PC-9 (cell line): ENCODE measurements at regions of chr6 and their contacts with region 1.

Region 1: DNA sequence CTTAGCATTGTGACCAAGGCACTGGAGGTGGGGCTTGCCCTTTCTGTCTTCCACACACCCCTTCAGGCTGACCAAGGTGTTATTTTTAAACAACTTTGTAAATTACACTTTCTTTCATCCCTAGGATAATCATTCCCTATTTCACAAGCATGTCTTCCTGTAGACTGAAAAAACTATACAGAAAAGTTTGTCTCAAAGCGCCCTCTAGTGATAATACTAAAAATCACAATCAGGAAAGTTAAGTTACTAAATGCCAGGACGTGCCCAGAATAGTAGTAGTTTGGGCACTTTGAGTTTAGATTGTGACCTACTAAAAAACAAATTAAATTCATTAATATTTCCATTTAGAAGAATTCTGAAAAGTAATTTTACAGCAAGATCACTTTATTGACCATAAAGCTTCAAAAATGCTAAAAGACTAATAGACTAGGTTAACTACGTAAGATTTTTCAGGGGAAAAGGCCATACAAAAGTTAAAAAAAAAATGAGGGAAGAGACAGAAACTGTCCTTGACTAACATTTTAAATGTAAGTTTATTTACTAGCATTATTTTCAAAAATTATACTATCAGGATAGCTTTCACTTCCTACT is 123.3 kb upstream of the DUSP22 start:
- DNase-seq: no peak
- H3K4me3 ChIP-seq: no peak overlapping the region
- H3K27ac ChIP-seq: no peak overlapping the region
- H3K4me1 ChIP-seq: no peaks in the 10 kb centered on the region
- H3K27me3 ChIP-seq: 0 out of 2 replicates have a peak, but pooled peaks cover 5% of the 10 kb centered on the region
- CTCF ChIP-seq: peak; percentile 75

Region 2: GRCh38 chr6:188821-189655 is 20.1 kb after region 1 on chr6:
- CTCF ChIA-PET with region 1: no interaction called
- POLR2A ChIA-PET with region 1: no interaction called
- intact Hi-C with region 1: no loop called
- DNase-seq: peak; percentile 69 to 86
- H3K4me3 ChIP-seq: no peak overlapping the region
- H3K27ac ChIP-seq: no peak overlapping the region
- H3K4me1 ChIP-seq: no peaks in the 10 kb centered on the region
- H3K27me3 ChIP-seq: peaks cover 12% of the 10 kb centered on the region; the same call in 1 of the 2 replicates
- CTCF ChIP-seq: peak; percentile 75

Region 3: DNA sequence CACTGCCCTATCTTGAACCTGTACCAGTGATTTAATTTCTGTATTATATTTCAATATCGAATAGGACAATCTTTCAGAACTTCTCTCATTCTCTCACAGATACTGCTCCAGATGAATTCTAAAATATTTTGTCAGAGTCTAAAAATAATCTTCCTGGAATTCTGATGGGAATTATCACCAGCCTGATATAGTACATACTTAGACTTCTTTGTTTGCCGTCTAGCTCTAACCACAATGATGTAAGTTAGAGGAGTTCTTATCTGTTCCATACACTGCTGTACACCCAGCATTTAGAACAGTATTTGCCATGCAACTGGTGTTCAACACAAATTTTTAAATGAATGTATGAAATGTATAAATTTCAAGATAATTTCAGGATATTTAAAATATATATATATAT is 489.3 kb after region 1 on chr6:
- CTCF ChIA-PET with region 1: no interaction called
- POLR2A ChIA-PET with region 1: no interaction called
- intact Hi-C with region 1: no loop called
- DNase-seq: no peak
- H3K4me3 ChIP-seq: no peak overlapping the region
- H3K27ac ChIP-seq: no peak overlapping the region
- H3K4me1 ChIP-seq: no peaks in the 10 kb centered on the region
- H3K27me3 ChIP-seq: no peaks in the 10 kb centered on the region
- CTCF ChIP-seq: no peak

Region 4: GRCh38 chr6:865846-866245 is 696.9 kb after region 1 on chr6:
- CTCF ChIA-PET with region 1: interaction called, 12 read pairs
- POLR2A ChIA-PET with region 1: no interaction called
- intact Hi-C with region 1: no loop called
- DNase-seq: no peak
- H3K4me3 ChIP-seq: no peak overlapping the region
- H3K27ac ChIP-seq: no peak overlapping the region
- H3K4me1 ChIP-seq: no peaks in the 10 kb centered on the region
- H3K27me3 ChIP-seq: no peaks in the 10 kb centered on the region
- CTCF ChIP-seq: no peak